ENCODE measurements at regions of chr18 and their contacts with region 1.

Region 1: DNA sequence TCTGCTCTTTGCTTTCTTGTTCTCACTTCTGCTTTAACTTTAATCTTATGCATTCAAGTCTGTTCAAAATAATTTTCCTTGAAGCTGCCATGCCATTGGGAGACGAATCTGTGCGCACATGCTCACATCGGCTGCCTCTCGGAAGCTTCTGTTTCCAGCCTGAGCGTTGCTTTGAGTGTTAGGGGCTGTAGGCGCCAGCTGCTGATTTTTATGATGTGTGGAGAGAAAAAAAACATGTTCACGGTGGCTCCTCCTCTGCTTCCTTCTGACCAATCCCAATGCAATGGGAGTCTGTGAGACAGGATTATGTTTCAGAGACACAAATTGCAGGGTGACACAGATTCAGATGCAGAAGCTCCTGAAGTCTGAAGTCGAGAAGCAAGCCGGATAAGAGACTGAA is at the start of gene MC4R:
- DNase-seq: peak; percentile 77
- H3K4me3 ChIP-seq: peak within 1 kb of the TSS; percentile 45 to 59
- H3K27ac ChIP-seq: peak within 1 kb of the TSS; percentile 28 to 95; a peak in 3 of 4 replicates
- H3K4me1 ChIP-seq: peaks cover 0 to 11% of the 10 kb centered on the region in 2 experiments; a peak in 2 of 4 replicates
- H3K27me3 ChIP-seq: no peaks in the 10 kb centered on the region
- CTCF ChIP-seq: no peak
- EP300 ChIP-seq: peak in 1 of 2 experiments; percentile 49; a peak in 1 of 4 replicates
- RAD21 ChIP-seq: peak; percentile 43
- polyA plus RNA-seq, gene MC4R: 0.21 and 0.62 TPM in 2 replicates

Region 2: DNA sequence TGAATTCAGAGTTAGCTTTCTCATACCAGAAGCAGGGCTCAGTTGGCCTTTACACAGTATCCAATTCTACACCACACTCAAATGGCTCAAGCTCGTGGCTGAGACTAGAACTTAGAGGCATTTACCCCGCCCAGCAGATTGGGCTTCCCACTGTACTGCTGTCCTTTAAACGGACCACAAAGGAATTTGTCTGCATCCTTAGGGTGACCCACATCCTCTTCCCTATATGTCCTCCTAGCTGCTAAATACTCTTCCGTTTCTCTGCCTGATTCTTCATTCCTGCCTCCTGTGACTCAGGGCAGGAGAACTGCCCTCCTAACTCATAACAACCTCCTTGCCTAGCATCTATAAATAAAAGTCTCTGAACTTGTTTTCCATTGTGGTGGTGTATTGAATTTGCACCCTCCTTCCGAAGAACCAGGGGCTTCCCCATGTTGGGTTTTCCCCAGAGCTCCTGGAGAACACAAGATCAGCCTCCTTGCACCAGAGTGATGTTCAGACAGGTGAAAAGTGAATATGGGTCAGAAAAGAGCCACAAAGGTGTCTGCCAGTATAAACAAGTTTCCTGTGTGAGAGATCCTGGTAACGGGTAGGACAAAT is 32.0 kb after region 1 on chr18:
- CTCF ChIA-PET with region 1: no interaction called
- POLR2A ChIA-PET with region 1: no interaction called
- DNase-seq: no peak
- H3K4me3 ChIP-seq: no peak overlapping the region
- H3K27ac ChIP-seq: no peak overlapping the region
- H3K4me1 ChIP-seq: no peaks in the 10 kb centered on the region
- H3K27me3 ChIP-seq: no peaks in the 10 kb centered on the region
- CTCF ChIP-seq: no peak
- EP300 ChIP-seq: no peak
- RAD21 ChIP-seq: no peak

Region 3: GRCh38 chr18:60549338-60549960 is 176.9 kb after region 1 on chr18:
- CTCF ChIA-PET with region 1: interaction called, 11 read pairs
- POLR2A ChIA-PET with region 1: no interaction called
- DNase-seq: peak; percentile 43
- H3K4me3 ChIP-seq: no peak overlapping the region; a peak in 1 of 4 replicates
- H3K27ac ChIP-seq: no peak overlapping the region; a peak in 1 of 4 replicates
- H3K4me1 ChIP-seq: no peaks in the 10 kb centered on the region
- H3K27me3 ChIP-seq: no peaks in the 10 kb centered on the region
- CTCF ChIP-seq: peak; percentile 95
- EP300 ChIP-seq: no peak
- RAD21 ChIP-seq: peak; percentile 99